ENCODE measurements at regions of chr10 and their contacts with region 1.

Region 1: DNA sequence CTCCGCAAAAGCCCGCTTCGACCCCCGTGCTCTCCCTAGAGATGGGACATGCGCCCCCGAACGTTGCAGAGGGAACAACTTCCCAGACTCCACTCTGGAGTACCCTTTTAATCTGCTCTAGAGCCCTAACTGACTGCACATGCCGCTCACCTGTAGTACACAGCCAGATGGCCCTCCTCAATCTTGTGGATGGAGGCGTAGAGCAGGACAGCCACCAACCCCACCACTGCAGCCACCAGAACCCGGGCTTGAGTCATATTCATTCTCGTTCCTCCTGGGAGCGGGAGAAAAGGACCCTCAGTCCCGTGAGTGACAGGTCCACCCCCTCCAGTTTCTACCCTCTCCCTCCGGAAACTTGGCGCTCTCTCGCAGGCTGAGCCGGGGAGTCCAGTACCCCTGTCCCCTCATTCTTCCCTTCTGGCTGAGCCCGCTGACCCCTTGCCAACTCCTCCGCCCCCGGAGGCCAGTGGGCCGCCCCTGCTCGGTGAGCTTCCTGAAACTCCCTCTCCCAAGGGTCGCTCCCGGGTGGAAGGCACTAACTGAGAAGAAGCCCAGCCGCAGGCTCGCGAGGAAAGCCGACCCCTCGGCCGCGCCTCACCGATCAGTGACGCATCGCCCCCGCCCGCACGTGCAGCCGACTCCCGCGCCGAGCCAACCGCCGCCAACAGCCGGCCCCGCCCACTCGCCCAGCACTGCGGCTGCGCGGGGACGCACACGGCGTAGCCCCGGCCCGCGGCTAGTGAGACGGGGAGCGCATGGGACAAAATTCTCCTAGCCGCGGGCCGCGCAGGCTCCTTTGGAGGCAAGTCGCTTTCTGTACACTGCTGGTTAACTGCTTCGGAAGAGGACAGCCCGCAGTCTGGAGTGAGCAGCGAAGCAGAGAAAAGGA is at the start of gene ERLIN1:
- DNase-seq: peak; percentile 93 to 96 (median 94)
- ATAC-seq: peak; percentile 98 to 99 (median 98)
- H3K4me3 ChIP-seq: peak within 1 kb of the TSS; percentile 65 to 92 (median 87)
- H3K27ac ChIP-seq: peak within 1 kb of the TSS; percentile 64 to 92 (median 82)
- H3K4me1 ChIP-seq: peaks cover 6 to 43% (median 20%) of the 10 kb centered on the region in 12 donors
- H3K27me3 ChIP-seq: no peaks in the 10 kb centered on the region
- CTCF ChIP-seq: no peak
- POLR2A ChIP-seq: peak in 1 of 2 donors; percentile 71
- total RNA-seq, gene ERLIN1: 4.3 to 16.5 (median 7.0) TPM

Region 2: GRCh38 chr10:99008054-99008453 is 1177.6 kb before region 1 on chr10:
- intact Hi-C with region 1: no loop called
- DNase-seq: no peak
- ATAC-seq: no peak
- H3K4me3 ChIP-seq: no peak overlapping the region
- H3K27ac ChIP-seq: no peak overlapping the region
- H3K4me1 ChIP-seq: no peaks in the 10 kb centered on the region
- H3K27me3 ChIP-seq: no peaks in the 10 kb centered on the region
- CTCF ChIP-seq: no peak
- POLR2A ChIP-seq: no peak

Region 3: GRCh38 chr10:99845837-99846382 is 339.7 kb before region 1 on chr10:
- intact Hi-C with region 1: loop called in 2 of 10 experiments (anchors 5 to 10 kb)
- DNase-seq: peak in 4 of 5 donors; percentile 62 to 79 (median 74)
- ATAC-seq: peak; percentile 84 to 97 (median 91)
- H3K4me3 ChIP-seq: peak overlapping the region in 11 of 12 donors; percentile 0 to 53 (median 39)
- H3K27ac ChIP-seq: peak overlapping the region in 1 of 12 donors; percentile 40
- H3K4me1 ChIP-seq: peaks cover 0 to 20% (median 2%) of the 10 kb centered on the region in 12 donors
- H3K27me3 ChIP-seq: no peaks in the 10 kb centered on the region
- CTCF ChIP-seq: peak; percentile 89 to 97 (median 93)
- POLR2A ChIP-seq: no peak

Region 4: GRCh38 chr10:100089241-100089640 is 96.4 kb before region 1 on chr10:
- intact Hi-C with region 1: no loop called
- DNase-seq: no peak
- ATAC-seq: no peak
- H3K4me3 ChIP-seq: no peak overlapping the region
- H3K27ac ChIP-seq: no peak overlapping the region
- H3K4me1 ChIP-seq: no peaks in the 10 kb centered on the region
- H3K27me3 ChIP-seq: peaks cover 0 to 5% (median 0%) of the 10 kb centered on the region in 9 donors
- CTCF ChIP-seq: no peak
- POLR2A ChIP-seq: no peak

Region 5: DNA sequence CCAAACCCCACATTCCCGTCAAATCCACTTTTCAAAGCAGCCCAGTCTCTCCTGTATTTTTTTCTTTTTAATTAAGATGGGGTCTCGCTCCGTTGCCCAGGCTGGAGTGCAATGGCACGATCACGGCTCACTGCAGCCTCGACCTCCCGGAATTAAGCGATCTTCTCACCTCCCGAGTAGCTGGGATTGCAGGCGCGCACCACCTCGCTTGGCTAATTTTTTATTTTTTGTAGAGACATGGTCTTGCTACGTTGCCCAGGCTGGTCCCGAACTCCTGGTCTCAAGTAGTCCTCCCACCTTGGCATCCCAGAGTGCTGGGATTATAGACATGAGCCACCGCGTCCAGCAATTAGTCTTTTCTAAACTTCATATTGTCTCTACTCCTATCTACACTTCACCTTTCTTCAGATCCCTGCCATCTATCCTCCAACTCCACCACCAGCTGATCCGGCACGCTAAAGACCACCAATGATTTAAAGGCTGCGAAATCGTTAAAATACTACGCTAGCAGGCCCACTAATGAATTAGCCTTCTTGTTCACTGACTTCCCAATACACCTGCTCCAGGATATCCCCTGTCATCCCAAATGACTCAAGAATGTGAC is 44.3 kb after region 1 on chr10:
- intact Hi-C with region 1: loop called in 3 of 10 experiments (anchors 2 to 5 kb)
- DNase-seq: no peak
- ATAC-seq: no peak
- H3K4me3 ChIP-seq: peak overlapping the region; percentile 64 to 98 (median 87)
- H3K27ac ChIP-seq: peak overlapping the region; percentile 10 to 84 (median 79)
- H3K4me1 ChIP-seq: peaks cover 0 to 22% (median 9%) of the 10 kb centered on the region in 12 donors
- H3K27me3 ChIP-seq: no peaks in the 10 kb centered on the region
- CTCF ChIP-seq: no peak
- POLR2A ChIP-seq: peak in 1 of 2 donors; percentile 30

Region 6: GRCh38 chr10:100267237-100268104 is 81.9 kb after region 1 on chr10 and contains the start of gene CWF19L1:
- intact Hi-C with region 1: loop called in 1 of 10 experiments (anchors 5 kb)
- DNase-seq: peak; percentile 87 to 91 (median 90)
- ATAC-seq: peak; percentile 90 to 98 (median 96)
- H3K4me3 ChIP-seq: peak within 1 kb of the TSS; percentile 66 to 99 (median 90)
- H3K27ac ChIP-seq: peak within 1 kb of the TSS; percentile 2 to 83 (median 74)
- H3K4me1 ChIP-seq: peaks cover 3 to 28% (median 14%) of the 10 kb centered on the region in 12 donors
- H3K27me3 ChIP-seq: no peaks in the 10 kb centered on the region
- CTCF ChIP-seq: no peak
- POLR2A ChIP-seq: peak in 1 of 2 donors; percentile 51
- total RNA-seq, gene CWF19L1: 11.1 to 17.3 (median 14.3) TPM

Measured in heart left ventricle (tissue), 16 donors.